BJ (cell line): ENCODE measurements at regions of chr9 and their contacts with region 1.

Region 1: DNA sequence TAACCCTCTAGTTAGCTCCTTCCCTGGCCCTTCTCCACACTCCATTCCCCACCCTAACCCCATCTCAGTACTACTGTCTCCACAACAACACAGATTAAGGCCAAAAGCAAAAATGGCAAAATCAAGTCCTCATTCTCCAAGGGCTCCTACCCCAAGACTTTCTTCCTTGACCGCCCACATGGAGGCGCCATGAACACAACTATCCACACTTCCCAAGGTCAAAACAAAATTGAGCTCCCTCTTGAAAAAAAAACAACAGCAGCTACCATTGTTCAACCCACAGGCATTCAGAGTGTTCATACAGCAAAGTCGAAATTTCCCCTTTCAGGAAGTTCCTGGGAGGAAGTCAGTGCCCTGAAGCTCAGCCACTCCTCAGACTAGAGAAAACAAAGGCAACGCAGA is 54.4 kb downstream of the GNAQ start:
- DNase-seq: no peak
- H3K4me3 ChIP-seq: no peak overlapping the region
- H3K27me3 ChIP-seq: no peaks in the 10 kb centered on the region
- CTCF ChIP-seq: peak; percentile 54

Region 2: GRCh38 chr9:77475641-77476473 is 501.4 kb before region 1 on chr9:
- CTCF ChIA-PET with region 1: no interaction called
- POLR2A ChIA-PET with region 1: no interaction called
- DNase-seq: no peak
- H3K4me3 ChIP-seq: no peak overlapping the region
- H3K27me3 ChIP-seq: no peaks in the 10 kb centered on the region
- CTCF ChIP-seq: no peak

Region 3: GRCh38 chr9:77997611-77998284 is 20.5 kb after region 1 on chr9:
- CTCF ChIA-PET with region 1: interaction called, 11 read pairs
- POLR2A ChIA-PET with region 1: no interaction called
- DNase-seq: no peak
- H3K4me3 ChIP-seq: no peak overlapping the region
- H3K27me3 ChIP-seq: no peaks in the 10 kb centered on the region
- CTCF ChIP-seq: no peak

Region 4: DNA sequence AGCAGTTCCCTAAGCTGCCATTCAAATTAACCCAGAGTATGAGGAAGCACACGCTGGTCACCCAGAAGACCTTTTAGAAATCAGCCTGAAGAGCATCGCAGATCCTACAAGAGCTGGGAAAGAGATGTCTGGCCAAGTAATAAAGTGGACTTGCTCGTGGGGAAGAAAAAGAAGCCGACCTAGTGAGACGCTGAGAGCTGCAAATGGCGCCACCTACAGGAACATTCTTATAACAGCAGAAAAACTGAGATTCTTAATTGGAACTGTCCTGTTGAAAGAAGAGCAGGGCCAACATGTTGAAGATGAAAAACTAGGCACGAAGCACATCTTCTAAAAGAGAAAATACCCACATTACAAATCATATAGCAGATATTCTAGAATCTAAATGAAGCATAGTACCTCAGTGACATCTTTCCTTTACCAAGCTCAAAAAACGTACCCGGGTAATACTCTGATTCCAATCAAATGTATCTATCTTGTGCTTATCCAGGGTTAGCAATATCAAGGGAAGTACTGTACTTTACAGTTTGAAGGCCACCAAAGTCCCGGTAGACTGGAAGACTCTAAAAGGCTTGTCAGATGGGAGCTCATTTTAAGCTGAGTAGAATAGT is 58.3 kb after region 1 on chr9:
- CTCF ChIA-PET with region 1: interaction called, 70 read pairs
- POLR2A ChIA-PET with region 1: interaction called, 4 read pairs
- DNase-seq: peak; percentile 44
- H3K4me3 ChIP-seq: no peak overlapping the region
- H3K27me3 ChIP-seq: no peaks in the 10 kb centered on the region
- CTCF ChIP-seq: peak; percentile 84

Region 5: GRCh38 chr9:78074385-78075291 is 97.4 kb after region 1 on chr9:
- CTCF ChIA-PET with region 1: no interaction called
- POLR2A ChIA-PET with region 1: no interaction called
- DNase-seq: no peak
- H3K4me3 ChIP-seq: no peak overlapping the region
- H3K27me3 ChIP-seq: peaks cover 2% of the 10 kb centered on the region; the same call in 1 of the 2 replicates
- CTCF ChIP-seq: no peak